Naive thymus-derived CD8-positive, alpha-beta T cell (primary cell): ENCODE measurements at regions of chr1 and their contacts with region 1.

Region 1: DNA sequence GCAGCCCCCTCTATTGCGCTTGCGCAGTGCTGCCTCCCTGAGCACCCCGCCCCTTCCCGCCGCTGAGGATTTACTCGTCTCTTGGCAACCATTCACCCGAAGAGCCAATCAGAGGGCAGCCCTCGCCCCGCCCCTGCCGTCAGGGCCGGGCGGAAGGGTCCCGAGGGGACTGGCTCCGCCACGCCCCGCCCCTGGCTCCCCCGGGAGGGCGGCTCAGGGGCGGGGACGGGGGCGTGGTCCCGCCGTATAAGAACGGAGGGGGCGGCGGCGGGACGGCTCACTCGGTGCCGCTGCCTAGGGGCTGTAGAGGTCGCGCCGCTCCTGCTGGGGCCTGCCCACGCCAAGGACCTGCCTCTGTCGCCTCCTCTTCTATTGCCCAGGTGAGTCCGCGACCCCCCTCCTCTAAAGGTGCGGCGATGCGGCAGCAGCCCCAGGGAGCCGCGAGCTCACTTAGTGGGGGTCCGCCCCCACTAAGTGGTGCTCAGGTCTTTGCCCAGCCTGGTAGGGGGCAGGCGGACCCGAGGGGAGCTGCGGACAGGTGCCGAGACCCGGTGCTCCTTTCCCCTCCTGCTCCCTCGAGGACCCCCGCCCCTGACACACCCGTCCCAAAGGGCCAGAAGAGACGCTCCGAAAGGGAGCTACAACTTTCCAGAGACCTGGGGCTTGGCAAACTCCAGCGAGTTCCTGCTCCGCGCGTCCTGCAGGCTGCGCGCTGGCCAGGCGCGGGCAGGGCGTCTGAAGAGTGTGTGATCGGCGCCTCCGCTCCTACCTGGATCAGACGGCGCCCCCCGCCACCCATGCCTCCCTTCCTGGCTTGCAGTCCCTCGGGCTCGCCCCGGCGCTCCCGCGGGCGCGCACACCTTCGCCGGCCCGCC is at the start of gene TENT5C:
- DNase-seq: peak; percentile 98 to 100 (median 99)
- ATAC-seq: peak; percentile 84 to 86
- H3K4me3 Mint-ChIP-seq: peak within 1 kb of the TSS; percentile 91 to 99 (median 98)
- H3K27ac Mint-ChIP-seq: peak within 1 kb of the TSS; percentile 96 to 100 (median 98)
- H3K4me1 Mint-ChIP-seq: peaks cover 17 to 48% (median 28%) of the 10 kb centered on the region in 4 donors
- H3K27me3 Mint-ChIP-seq: peaks cover 0 to 4% (median 0%) of the 10 kb centered on the region in 5 donors
- polyA plus RNA-seq, gene TENT5C: 0.19 to 16.2 (median 0.36) TPM

Region 2: GRCh38 chr1:117654493-117655219 is 48.6 kb after region 1 on chr1:
- POLR2A ChIA-PET with region 1: interaction called, 37 read pairs
- DNase-seq: peak in 2 of 10 donors; percentile 19 to 35
- ATAC-seq: no peak
- H3K4me3 Mint-ChIP-seq: peak overlapping the region in 9 of 10 donors; percentile 28 to 84 (median 67)
- H3K27ac Mint-ChIP-seq: peak overlapping the region; percentile 51 to 95 (median 80)
- H3K4me1 Mint-ChIP-seq: peaks cover 55 to 87% (median 78%) of the 10 kb centered on the region in 4 donors
- H3K27me3 Mint-ChIP-seq: peaks cover 13 to 51% (median 30%) of the 10 kb centered on the region in 5 donors

Region 3: GRCh38 chr1:117664314-117664713 is 58.3 kb after region 1 on chr1:
- POLR2A ChIA-PET with region 1: interaction called, 15 read pairs
- DNase-seq: peak in 9 of 10 donors; percentile 42 to 89 (median 73)
- ATAC-seq: peak; percentile 86 to 87
- H3K4me3 Mint-ChIP-seq: peak overlapping the region in 7 of 10 donors; percentile 27 to 61 (median 45)
- H3K27ac Mint-ChIP-seq: peak overlapping the region; percentile 74 to 97 (median 94)
- H3K4me1 Mint-ChIP-seq: peaks cover 28 to 82% (median 56%) of the 10 kb centered on the region in 4 donors
- H3K27me3 Mint-ChIP-seq: peaks cover 7 to 59% (median 25%) of the 10 kb centered on the region in 5 donors